Right ventricle myocardium inferior (tissue), 1 donor: ENCODE measurements at regions of chr5 and their contacts with region 1.

Region 1: GRCh38 chr5:37043688-37044087 is 167.1 kb downstream of the NIPBL start:
- DNase-seq: no peak
- ATAC-seq: no peak

Region 2: GRCh38 chr5:36521838-36522745 is 521.6 kb before region 1 on chr5:
- intact Hi-C with region 1: no loop called
- DNase-seq: no peak
- ATAC-seq: peak; percentile 90

Region 3: GRCh38 chr5:37174928-37175327 is 131.2 kb after region 1 on chr5:
- intact Hi-C with region 1: loop called (anchors 10 kb)
- DNase-seq: no peak
- ATAC-seq: no peak

Region 4: DNA sequence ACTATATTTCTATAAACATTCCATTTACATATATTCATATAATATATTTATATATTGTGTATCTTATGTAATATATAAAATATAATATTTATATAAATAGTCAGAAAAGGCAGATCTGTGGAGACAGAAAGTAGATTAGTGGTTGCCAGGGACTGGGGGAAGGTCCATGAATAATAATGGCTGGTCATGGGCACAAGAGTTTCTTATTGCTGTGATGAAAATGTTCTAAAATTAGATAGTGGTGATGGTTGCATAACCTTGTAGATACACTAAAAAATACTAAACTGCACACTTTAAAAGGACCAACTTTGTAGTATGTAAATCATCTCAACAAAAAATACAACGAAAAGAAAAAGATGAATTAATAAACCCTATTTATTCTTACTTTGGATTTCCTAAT is 279.9 kb after region 1 on chr5:
- intact Hi-C with region 1: loop called (anchors 10 kb)
- DNase-seq: no peak
- ATAC-seq: no peak